CD4-positive, alpha-beta memory T cell (primary cell): ENCODE measurements at regions of chr6 and their contacts with region 1.

Region 1: GRCh38 chr6:44172731-44173500 is 14.3 kb downstream of the CAPN11 start:
- DNase-seq: peak; percentile 53 to 68 (median 62)
- H3K4me3 ChIP-seq: no peak overlapping the region
- H3K4me3 Mint-ChIP-seq: no peak overlapping the region
- H3K27ac ChIP-seq: no peak overlapping the region
- H3K27ac Mint-ChIP-seq: peak overlapping the region in 2 of 7 donors; percentile 0 to 48
- H3K4me1 ChIP-seq: peaks cover 9% of the 10 kb centered on the region
- H3K4me1 Mint-ChIP-seq: peaks cover 0 to 5% (median 2%) of the 10 kb centered on the region in 4 donors
- H3K27me3 ChIP-seq: no peaks in the 10 kb centered on the region
- H3K27me3 Mint-ChIP-seq: peaks cover 8 to 16% of the 10 kb centered on the region in 2 donors

Region 2: GRCh38 chr6:43838276-43839036 is 334.5 kb before region 1 on chr6:
- CTCF ChIA-PET with region 1: no interaction called
- POLR2A ChIA-PET with region 1: no interaction called
- intact Hi-C with region 1: no loop called
- DNase-seq: no peak
- H3K4me3 ChIP-seq: no peak overlapping the region
- H3K4me3 Mint-ChIP-seq: no peak overlapping the region
- H3K27ac ChIP-seq: no peak overlapping the region
- H3K27ac Mint-ChIP-seq: no peak overlapping the region
- H3K4me1 ChIP-seq: no peaks in the 10 kb centered on the region
- H3K4me1 Mint-ChIP-seq: no peaks in the 10 kb centered on the region
- H3K27me3 ChIP-seq: no peaks in the 10 kb centered on the region
- H3K27me3 Mint-ChIP-seq: no peaks in the 10 kb centered on the region

Region 3: GRCh38 chr6:44161997-44162338 is 10.9 kb before region 1 on chr6:
- CTCF ChIA-PET with region 1: interaction called, 21 read pairs
- POLR2A ChIA-PET with region 1: no interaction called
- intact Hi-C with region 1: no loop called
- DNase-seq: no peak
- H3K4me3 ChIP-seq: no peak overlapping the region
- H3K4me3 Mint-ChIP-seq: no peak overlapping the region
- H3K27ac ChIP-seq: no peak overlapping the region
- H3K27ac Mint-ChIP-seq: no peak overlapping the region
- H3K4me1 ChIP-seq: no peaks in the 10 kb centered on the region
- H3K4me1 Mint-ChIP-seq: no peaks in the 10 kb centered on the region
- H3K27me3 ChIP-seq: no peaks in the 10 kb centered on the region
- H3K27me3 Mint-ChIP-seq: peaks cover 16 to 32% of the 10 kb centered on the region in 2 donors

Region 4: GRCh38 chr6:44257025-44257752 is 84.3 kb after region 1 on chr6 and contains the start of gene SLC35B2:
- CTCF ChIA-PET with region 1: interaction called, 10 read pairs
- POLR2A ChIA-PET with region 1: interaction called, 3 read pairs
- intact Hi-C with region 1: loop called (anchors 1 kb)
- DNase-seq: peak; percentile 57 to 81 (median 70)
- H3K4me3 ChIP-seq: peak within 1 kb of the TSS; percentile 63 to 73
- H3K4me3 Mint-ChIP-seq: peak within 1 kb of the TSS; percentile 86 to 94 (median 89)
- H3K27ac ChIP-seq: peak within 1 kb of the TSS; percentile 82
- H3K27ac Mint-ChIP-seq: peak within 1 kb of the TSS; percentile 80 to 97 (median 96)
- H3K4me1 ChIP-seq: peaks cover 40% of the 10 kb centered on the region
- H3K4me1 Mint-ChIP-seq: peaks cover 33 to 62% (median 49%) of the 10 kb centered on the region in 4 donors
- H3K27me3 ChIP-seq: no peaks in the 10 kb centered on the region
- H3K27me3 Mint-ChIP-seq: no peaks in the 10 kb centered on the region
- total RNA-seq, gene SLC35B2: 20.7 to 20.9 TPM

Region 5: DNA sequence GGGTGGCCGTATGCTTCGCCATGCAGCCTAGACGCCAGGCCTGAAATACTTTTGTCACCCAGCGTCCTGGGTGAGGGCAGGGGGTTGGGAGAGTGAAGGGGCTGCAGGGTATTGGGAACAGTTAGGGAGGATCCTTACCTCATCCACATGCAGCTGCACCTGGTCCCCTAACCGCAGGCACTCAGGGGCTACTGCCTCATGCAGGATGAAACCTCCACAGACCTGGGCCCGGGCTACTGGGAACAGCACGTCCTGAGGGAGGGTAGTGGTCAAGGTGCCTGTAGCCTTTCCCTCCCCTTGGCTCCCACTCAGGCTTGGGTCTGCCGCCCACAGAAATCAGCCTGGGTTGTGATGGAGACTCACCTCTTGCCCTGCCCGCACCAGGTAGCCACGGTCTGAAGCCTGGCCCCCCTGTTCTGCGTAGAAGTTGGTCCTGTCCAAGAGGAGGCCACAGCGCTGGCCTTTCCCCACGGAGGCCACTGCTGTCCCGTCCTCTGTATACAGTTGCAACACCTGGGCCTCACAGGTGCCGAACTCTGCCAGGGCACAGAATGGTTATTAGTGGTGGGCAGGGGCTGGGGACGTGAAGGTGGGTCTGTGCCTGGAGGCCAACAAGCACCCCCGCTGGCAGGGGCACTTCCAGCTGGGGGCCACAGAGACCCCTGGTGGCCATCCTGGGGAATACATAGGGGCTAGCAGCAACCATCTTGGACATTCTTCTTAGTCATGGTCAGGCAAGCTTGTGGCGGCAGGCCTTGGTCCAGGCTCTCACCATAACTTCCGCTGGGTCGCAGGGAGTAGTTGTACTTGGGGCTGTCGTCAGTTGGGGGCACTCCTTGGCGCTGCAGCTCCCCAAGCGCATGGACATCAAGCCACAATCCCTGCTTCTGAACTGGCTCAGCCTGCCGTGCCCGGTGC is 131.6 kb after region 1 on chr6:
- CTCF ChIA-PET with region 1: no interaction called
- POLR2A ChIA-PET with region 1: no interaction called
- intact Hi-C with region 1: loop called (anchors 2 kb)
- DNase-seq: peak in 4 of 5 donors; percentile 30 to 37 (median 36)
- H3K4me3 ChIP-seq: no peak overlapping the region
- H3K4me3 Mint-ChIP-seq: no peak overlapping the region
- H3K27ac ChIP-seq: no peak overlapping the region
- H3K27ac Mint-ChIP-seq: peak overlapping the region in 2 of 7 donors; percentile 40 to 43
- H3K4me1 ChIP-seq: no peaks in the 10 kb centered on the region
- H3K4me1 Mint-ChIP-seq: peaks cover 0 to under 1% (median 0%) of the 10 kb centered on the region in 4 donors
- H3K27me3 ChIP-seq: no peaks in the 10 kb centered on the region
- H3K27me3 Mint-ChIP-seq: no peaks in the 10 kb centered on the region

Region 6: GRCh38 chr6:44338228-44339122 is 165.6 kb after region 1 on chr6:
- CTCF ChIA-PET with region 1: interaction called, 48 read pairs
- POLR2A ChIA-PET with region 1: no interaction called
- intact Hi-C with region 1: loop called (anchors 1 kb)
- DNase-seq: peak; percentile 53 to 67 (median 65)
- H3K4me3 ChIP-seq: no peak overlapping the region
- H3K4me3 Mint-ChIP-seq: no peak overlapping the region
- H3K27ac ChIP-seq: no peak overlapping the region
- H3K27ac Mint-ChIP-seq: peak overlapping the region in 1 of 7 donors; percentile 12
- H3K4me1 ChIP-seq: no peaks in the 10 kb centered on the region
- H3K4me1 Mint-ChIP-seq: no peaks in the 10 kb centered on the region
- H3K27me3 ChIP-seq: peaks cover 12% of the 10 kb centered on the region
- H3K27me3 Mint-ChIP-seq: peaks cover 16 to 26% of the 10 kb centered on the region in 2 donors